ENCODE measurements at regions of chr10 and their contacts with region 1.

Region 1: DNA sequence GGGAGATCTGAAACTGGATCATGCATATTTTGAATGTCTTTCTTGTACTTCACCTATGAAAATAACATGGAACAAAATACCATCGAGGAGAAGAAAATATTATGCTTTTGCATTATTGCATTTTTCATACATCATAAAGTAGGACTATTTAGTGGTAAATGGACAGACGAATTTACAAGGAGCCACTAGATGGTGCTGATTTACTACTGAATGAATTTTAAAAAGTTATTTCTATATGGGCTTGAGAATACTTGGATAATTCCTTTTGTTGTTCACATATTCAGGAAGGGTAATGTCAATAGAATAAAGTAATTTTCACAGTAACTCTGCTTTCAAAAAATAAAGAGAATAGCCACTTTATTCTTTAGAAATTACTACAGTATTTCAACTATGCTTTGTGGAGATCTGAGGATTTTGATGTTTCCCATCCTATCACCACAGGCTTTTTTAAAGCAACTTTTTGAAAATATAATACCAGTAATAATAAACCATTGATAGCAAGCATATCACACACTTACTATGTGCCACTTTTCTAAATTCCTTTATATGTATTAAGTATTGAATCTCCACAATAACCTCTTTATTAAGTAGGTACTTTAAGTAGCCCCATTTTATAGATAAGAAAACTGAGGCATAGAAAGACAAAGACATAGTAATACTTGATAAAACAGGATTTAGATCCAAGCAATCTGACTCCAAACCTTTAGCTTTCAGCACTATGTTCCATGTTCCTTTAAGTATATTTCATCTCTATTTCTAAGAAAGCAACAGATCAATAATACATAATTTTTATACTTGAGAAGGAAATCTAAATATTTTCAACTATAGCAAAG is 38.6 kb downstream of the NEBL start:
- DNase-seq: peak; percentile 8
- ATAC-seq: no peak
- H3K4me3 ChIP-seq: no peak overlapping the region
- H3K4me3 Mint-ChIP-seq: no peak overlapping the region
- H3K27ac ChIP-seq: no peak overlapping the region
- H3K27ac Mint-ChIP-seq: no peak overlapping the region
- H3K4me1 ChIP-seq: no peaks in the 10 kb centered on the region
- H3K4me1 Mint-ChIP-seq: no peaks in the 10 kb centered on the region
- H3K27me3 ChIP-seq: no peaks in the 10 kb centered on the region
- H3K27me3 Mint-ChIP-seq: peaks cover under 1% of the 10 kb centered on the region
- CTCF ChIP-seq: peak; percentile 65

Region 2: DNA sequence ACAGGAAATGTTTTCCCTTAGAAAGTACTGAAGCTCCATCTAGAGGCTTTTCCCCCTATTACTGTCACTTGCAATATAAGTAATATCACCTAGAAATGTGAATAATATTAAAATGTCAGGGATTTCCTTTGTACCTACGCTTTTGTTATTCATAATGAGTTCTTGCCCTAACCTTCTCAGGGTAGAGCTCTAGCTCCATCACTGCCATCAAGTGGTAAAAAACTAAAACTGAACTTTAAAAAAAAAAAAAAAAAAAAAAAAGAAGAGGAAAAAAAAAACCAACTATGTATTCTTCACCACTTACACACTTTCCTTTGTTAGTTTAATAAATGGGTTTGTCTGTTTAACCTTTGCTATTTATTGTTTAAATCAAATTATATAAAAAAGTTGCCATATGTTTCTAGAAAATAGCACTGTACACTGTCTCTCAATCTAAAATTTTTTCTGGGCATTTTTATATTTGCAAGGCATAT is 1095.1 kb after region 1 on chr10:
- CTCF ChIA-PET with region 1: no interaction called
- POLR2A ChIA-PET with region 1: no interaction called
- intact Hi-C with region 1: loop called (anchors 5 kb)
- DNase-seq: peak; percentile 23
- ATAC-seq: no peak
- H3K4me3 ChIP-seq: no peak overlapping the region
- H3K4me3 Mint-ChIP-seq: no peak overlapping the region
- H3K27ac ChIP-seq: no peak overlapping the region
- H3K27ac Mint-ChIP-seq: no peak overlapping the region
- H3K4me1 ChIP-seq: peaks cover 2 to 4% of the 10 kb centered on the region in 2 donors
- H3K4me1 Mint-ChIP-seq: peaks cover 4% of the 10 kb centered on the region
- H3K27me3 ChIP-seq: no peaks in the 10 kb centered on the region
- H3K27me3 Mint-ChIP-seq: no peaks in the 10 kb centered on the region
- CTCF ChIP-seq: peak; percentile 57